Pancreas (tissue), 10 donors: ENCODE measurements at regions of chr9 and their contacts with region 1.

Region 1: DNA sequence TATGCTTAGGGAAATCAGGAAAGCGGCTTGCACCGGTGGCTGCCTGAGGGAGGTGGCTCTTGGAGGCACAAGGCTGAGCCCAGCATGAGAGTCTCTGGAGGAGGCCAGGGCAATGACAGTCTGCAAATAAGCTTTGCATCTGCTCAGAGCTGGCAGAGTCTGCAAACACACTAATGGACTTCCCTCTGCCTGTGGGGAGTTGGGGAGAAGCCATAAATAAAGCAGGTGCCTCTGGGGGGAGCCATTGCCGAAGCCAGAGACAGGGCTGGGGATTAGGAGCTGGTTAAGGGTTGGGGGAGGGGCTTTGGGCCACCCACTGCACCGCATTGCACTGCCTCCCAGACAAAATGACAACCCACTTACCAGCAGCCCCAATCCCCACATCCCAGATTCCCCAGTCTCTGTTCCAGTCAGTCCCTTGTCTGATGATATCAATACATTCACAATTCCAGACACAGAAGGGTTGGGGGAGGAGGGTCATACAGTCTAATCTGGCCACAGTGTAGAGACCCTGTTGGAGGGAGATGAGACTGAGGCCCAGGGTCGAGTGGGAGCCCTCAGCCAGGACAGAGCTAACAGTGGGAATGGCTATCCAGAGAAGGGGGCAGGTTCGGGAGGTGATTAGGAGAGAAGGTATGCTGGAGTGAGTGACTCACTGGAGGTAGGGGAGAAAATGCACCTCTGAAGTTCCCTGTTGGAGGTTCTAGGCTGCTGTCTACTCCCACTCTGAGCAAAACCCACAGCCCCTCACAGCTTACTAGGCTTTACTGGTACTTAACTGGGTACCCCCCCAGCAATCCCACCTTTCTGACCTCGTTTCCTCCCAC is 53.7 kb downstream of the PAX5 start:
- DNase-seq: no peak
- ATAC-seq: peak in 1 of 4 donors; percentile 21
- H3K4me3 ChIP-seq: no peak overlapping the region
- H3K27ac ChIP-seq: no peak overlapping the region
- H3K4me1 ChIP-seq: no peaks in the 10 kb centered on the region
- H3K27me3 ChIP-seq: no peaks in the 10 kb centered on the region
- CTCF ChIP-seq: no peak

Region 2: DNA sequence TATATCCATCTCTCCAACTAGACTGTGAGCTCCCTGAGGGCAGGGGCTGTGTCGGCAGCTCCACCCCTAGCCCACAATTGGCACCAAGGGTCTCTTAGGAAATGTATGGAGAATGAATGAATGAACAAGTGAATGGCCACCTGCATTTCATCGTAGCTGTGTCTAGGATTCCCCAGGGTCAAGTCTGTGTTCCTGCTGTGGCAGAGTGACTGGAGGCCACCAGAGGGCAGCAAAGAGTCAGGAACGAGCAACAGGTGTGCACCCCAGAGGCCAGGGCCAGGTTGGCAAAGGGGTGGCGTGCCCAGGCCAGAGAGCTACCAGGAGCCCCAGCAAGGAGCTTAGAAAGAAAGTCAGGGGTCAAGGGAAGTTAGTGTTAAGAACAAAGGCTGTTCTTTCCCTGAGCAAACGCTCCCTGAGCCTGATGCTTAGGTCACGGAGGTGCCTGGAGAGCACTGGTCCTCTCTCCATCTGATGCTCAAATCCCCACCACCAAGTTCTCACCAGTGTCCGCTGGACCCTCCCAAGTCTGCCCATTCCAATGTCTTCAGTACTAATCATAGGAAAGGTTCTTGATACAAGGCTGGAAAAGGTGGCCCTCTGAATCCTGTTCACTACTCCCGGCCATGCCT is 107.0 kb before region 1 on chr9:
- intact Hi-C with region 1: loop called in 1 of 3 experiments (anchors 10 kb)
- DNase-seq: peak; percentile 50 to 85 (median 80)
- ATAC-seq: peak; percentile 83 to 96 (median 92)
- H3K4me3 ChIP-seq: no peak overlapping the region
- H3K27ac ChIP-seq: no peak overlapping the region
- H3K4me1 ChIP-seq: no peaks in the 10 kb centered on the region
- H3K27me3 ChIP-seq: no peaks in the 10 kb centered on the region
- CTCF ChIP-seq: peak; percentile 83 to 86 (median 86)